GM12878 (cell line): ENCODE measurements at regions of chr7 and their contacts with region 1.

Region 1: DNA sequence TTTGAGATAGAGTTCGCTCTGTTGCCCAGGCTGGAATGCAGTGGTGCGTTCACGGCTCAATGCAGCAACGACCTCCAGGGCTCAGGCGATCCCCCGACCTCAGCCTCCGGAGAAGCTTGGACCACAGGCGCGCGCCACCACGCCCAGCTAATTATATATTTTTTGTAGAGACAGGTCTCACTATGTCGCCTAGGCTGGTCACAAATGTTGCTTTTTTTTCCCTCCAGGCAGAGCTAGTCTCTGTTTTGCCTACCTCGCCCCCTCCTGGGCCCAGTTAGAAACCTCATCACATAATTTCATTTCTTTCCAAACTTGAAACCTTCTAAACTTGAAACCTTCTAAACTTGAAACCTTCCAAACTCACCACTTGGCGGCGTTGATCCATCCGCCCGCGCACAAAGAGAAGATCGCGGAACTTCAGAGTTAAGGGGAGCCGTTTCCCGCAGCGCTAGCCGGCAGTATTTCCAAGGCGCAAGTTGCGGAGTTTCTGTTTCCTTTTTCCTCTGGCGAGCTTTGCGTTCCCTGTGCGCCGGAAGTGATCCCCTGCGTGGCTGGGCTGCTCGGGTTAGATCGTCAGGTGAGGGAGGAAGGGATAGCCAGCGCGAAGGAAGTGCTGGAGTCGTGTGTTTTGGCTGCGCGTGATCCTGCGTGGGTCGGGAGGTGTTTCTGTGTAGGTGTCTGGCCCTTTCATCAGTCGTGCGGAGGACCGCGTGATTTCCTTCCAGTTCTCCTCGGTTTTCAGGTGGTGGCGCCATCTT is at the start of gene SSBP1:
- DNase-seq: peak; percentile 92
- ATAC-seq: peak; percentile 91
- H3K4me3 ChIP-seq: peak within 1 kb of the TSS; percentile 98
- H3K27ac ChIP-seq: peak within 1 kb of the TSS; percentile 91
- H3K4me1 ChIP-seq: peaks cover 4% of the 10 kb centered on the region; the same call in 1 of the 2 replicates
- H3K27me3 ChIP-seq: no peaks in the 10 kb centered on the region
- CTCF ChIP-seq: peak; percentile 83 to 98 (median 84)
- EP300 ChIP-seq: no peak; a peak in 1 of 4 replicates
- POLR2A ChIP-seq: peak; percentile 99
- RAD21 ChIP-seq: peak; percentile 49
- polyA plus RNA-seq, gene SSBP1: 802 to 998 TPM

Region 2: DNA sequence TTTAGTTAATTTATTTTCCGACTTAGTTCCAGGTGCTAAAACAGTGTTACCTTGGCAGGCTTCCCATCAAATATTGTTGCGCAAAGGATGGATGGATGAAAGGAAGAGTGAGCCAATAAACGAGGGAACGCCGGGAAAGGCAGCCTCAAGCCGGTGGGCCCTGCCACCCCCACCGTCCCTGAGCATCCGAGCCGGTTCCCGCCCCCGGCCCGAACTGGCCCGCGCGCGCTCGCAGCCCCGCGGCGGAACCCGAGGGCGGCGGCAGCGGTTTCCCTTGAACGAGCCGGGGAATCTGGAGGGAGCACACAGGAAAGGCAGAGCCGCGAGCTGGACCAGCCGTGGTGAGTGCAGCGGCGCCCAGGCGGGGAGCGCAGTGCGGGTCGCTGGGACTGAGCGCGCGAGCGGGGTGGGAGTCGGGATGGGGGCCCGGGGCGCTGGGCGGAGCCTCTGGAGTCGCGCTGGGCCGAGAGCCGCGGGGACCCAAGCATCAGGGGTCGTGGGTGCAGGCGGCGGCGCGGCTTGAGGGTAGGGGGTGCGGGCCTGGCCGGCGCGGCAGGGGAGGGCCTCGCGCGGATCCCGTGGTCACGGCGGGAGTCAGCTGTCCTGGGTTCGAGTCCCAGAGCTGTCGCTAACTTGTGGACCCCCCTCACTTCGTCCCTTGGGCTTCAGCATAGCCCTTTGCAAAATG is 186.8 kb before region 1 on chr7 and contains the start of gene AGK:
- CTCF ChIA-PET with region 1: interaction called, 7 read pairs
- POLR2A ChIA-PET with region 1: no interaction called
- RAD21 ChIA-PET with region 1: no interaction called
- SMC1A ChIA-PET with region 1: interaction called, 3 read pairs
- in situ Hi-C with region 1: no loop called
- intact Hi-C with region 1: loop called (anchors 5 kb)
- DNase-seq: no peak
- ATAC-seq: peak; percentile 96
- H3K4me3 ChIP-seq: peak within 1 kb of the TSS; percentile 84
- H3K27ac ChIP-seq: peak within 1 kb of the TSS; percentile 84
- H3K4me1 ChIP-seq: peaks cover 8% of the 10 kb centered on the region
- H3K27me3 ChIP-seq: no peaks in the 10 kb centered on the region
- CTCF ChIP-seq: no peak
- EP300 ChIP-seq: no peak
- POLR2A ChIP-seq: peak; percentile 97
- RAD21 ChIP-seq: no peak
- polyA plus RNA-seq, gene AGK: 32.5 to 34.1 TPM

Region 3: DNA sequence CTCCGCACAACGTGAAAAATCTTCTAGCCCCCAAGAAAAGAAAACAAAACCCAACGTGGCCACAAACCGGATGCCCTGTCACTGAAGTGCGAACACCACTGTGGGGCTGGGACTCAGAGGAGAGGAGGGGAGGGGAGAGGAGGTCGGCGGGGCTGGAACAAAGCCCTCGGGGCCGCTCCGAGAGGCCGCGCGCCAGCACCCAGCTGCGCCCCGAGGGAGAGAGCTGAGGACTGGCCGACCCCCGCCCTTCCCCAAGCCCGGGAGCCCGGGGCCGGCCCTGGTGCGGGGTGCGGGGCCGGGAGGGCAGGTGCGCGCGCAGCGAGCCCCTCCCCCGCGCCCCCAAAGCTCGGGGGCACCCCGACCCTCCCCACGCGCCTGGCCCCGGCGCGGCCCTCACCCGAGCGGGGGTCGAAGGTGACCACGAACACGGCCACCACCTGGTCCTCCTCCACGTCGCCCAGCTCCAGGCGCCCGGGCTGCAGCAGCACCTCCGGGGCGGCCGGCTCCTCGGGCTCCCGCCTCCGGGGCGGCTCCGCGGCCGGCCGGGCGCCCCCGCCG is 36.4 kb before region 1 on chr7:
- CTCF ChIA-PET with region 1: interaction called, 36 read pairs
- POLR2A ChIA-PET with region 1: interaction called, 8 read pairs
- RAD21 ChIA-PET with region 1: interaction called, 5 read pairs
- SMC1A ChIA-PET with region 1: interaction called, 11 read pairs
- in situ Hi-C with region 1: no loop called
- intact Hi-C with region 1: loop called (anchors 2 kb)
- DNase-seq: peak; percentile 20
- ATAC-seq: peak; percentile 91
- H3K4me3 ChIP-seq: peak overlapping the region; percentile 76; the same call in 1 of the 2 replicates
- H3K27ac ChIP-seq: peak overlapping the region; percentile 49
- H3K4me1 ChIP-seq: peaks cover 4% of the 10 kb centered on the region; the same call in 1 of the 2 replicates
- H3K27me3 ChIP-seq: peaks cover 0 to 2% of the 10 kb centered on the region in 2 experiments; a peak in 1 of 4 replicates
- CTCF ChIP-seq: no peak
- EP300 ChIP-seq: no peak
- POLR2A ChIP-seq: peak; percentile 74
- RAD21 ChIP-seq: no peak

Region 4: GRCh38 chr7:141710301-141710700 is 27.7 kb before region 1 on chr7:
- CTCF ChIA-PET with region 1: interaction called, 15 read pairs
- POLR2A ChIA-PET with region 1: interaction called, 3 read pairs
- RAD21 ChIA-PET with region 1: no interaction called
- SMC1A ChIA-PET with region 1: interaction called, 6 read pairs
- in situ Hi-C with region 1: no loop called
- intact Hi-C with region 1: no loop called
- DNase-seq: no peak
- ATAC-seq: no peak
- H3K4me3 ChIP-seq: no peak overlapping the region
- H3K27ac ChIP-seq: no peak overlapping the region
- H3K4me1 ChIP-seq: no peaks in the 10 kb centered on the region
- H3K27me3 ChIP-seq: no peaks in the 10 kb centered on the region
- CTCF ChIP-seq: peak in 1 of 3 experiments; percentile 10; a peak in 2 of 6 replicates
- EP300 ChIP-seq: no peak
- POLR2A ChIP-seq: no peak
- RAD21 ChIP-seq: peak; percentile 23; the same call in 1 of the 2 replicates

Region 5: DNA sequence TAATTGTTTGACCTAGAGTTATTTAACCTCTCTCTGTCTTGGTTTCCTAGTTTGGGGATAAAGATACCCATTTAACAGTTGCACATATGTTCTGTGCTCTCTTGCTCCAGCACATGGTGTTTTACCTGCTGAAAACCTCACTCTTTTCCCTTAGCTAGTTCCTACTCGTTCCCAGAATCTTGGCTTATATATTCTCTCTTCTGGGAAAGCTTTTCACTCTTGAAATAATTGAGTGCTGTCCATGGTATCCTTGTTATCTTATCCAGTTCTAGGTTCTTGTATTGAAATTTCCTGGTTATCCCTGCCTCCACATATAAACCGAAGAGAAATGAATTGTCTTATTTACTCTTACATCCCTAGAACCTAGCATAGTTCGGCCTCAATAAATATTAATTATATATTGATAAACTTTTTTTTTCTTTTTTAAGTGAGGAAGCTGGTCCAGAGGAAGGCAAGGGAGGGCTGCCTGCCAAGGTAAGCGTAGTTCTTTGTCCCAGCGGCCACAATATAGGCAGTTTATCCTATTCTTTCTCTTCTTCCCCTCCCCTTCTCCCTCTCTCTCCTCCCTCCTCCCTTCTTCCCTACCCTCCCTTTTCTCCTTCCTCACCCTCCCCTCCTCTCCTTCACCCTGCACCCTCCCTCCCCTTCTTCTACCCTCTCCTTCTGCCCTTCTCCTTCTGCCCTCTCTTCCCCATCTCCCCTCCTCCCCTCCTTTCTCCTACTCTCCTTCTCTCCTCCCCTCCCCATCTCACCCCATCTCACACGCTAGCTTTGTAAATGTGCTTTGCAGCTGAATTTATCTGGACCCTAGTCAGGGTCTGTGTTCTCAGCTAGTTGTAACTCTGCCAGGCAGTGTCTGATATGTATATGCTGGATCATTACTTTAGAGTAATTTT is 22.0 kb before region 1 on chr7:
- CTCF ChIA-PET with region 1: interaction called, 10 read pairs
- POLR2A ChIA-PET with region 1: interaction called, 3 read pairs
- RAD21 ChIA-PET with region 1: no interaction called
- SMC1A ChIA-PET with region 1: interaction called, 6 read pairs
- in situ Hi-C with region 1: no loop called
- intact Hi-C with region 1: no loop called
- DNase-seq: no peak
- ATAC-seq: no peak
- H3K4me3 ChIP-seq: no peak overlapping the region
- H3K27ac ChIP-seq: no peak overlapping the region
- H3K4me1 ChIP-seq: no peaks in the 10 kb centered on the region
- H3K27me3 ChIP-seq: no peaks in the 10 kb centered on the region; a peak in 1 of 4 replicates
- CTCF ChIP-seq: no peak
- EP300 ChIP-seq: no peak
- POLR2A ChIP-seq: no peak
- RAD21 ChIP-seq: no peak

Region 6: DNA sequence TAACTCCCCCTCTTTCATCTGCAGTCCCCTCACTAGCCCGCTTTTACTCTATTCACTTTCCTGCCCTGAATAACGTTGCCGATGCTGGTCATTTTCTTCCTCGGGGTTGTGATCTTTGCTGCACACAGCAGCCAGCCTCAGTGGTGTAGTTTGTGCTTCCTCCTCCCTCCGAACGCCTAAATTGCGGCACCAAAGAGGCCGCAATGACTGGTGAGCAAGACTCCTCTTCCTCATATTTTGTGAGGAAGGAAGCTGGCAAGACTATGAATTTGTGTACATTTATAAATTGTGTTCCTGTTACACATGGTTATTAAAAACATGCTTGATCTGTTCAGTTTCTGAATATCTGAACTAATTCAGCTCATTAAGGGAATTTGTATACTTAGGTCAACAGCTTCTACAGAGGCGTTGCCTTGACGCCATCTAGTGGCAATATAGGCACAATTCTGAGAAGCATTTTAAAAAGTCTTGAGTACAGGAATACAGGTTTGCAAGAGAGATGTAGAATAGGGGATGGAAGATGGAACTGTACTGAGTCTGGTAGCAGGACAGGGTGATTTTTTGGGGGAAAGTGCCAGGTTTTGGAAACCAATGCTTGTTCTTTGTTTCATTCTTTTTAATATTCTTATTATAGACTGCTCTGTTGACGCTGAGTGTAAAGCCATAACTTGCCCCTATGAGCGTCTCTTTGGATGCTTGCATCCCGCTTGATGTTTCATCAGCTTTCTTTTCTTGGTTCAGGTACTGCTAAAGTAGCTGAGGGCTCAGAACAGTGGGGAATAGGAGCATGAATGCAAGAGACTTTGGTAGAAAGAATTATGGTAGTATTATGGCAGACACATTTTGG is 47.9 kb after region 1 on chr7:
- CTCF ChIA-PET with region 1: interaction called, 20 read pairs
- POLR2A ChIA-PET with region 1: no interaction called
- RAD21 ChIA-PET with region 1: interaction called, 3 read pairs
- SMC1A ChIA-PET with region 1: interaction called, 5 read pairs
- in situ Hi-C with region 1: no loop called
- intact Hi-C with region 1: no loop called
- DNase-seq: peak; percentile 8
- ATAC-seq: peak; percentile 92
- H3K4me3 ChIP-seq: no peak overlapping the region
- H3K27ac ChIP-seq: no peak overlapping the region
- H3K4me1 ChIP-seq: no peaks in the 10 kb centered on the region
- H3K27me3 ChIP-seq: no peaks in the 10 kb centered on the region
- CTCF ChIP-seq: peak; percentile 66 to 87 (median 76)
- EP300 ChIP-seq: no peak
- POLR2A ChIP-seq: no peak
- RAD21 ChIP-seq: peak; percentile 78